ENCODE measurements at regions of chr13 and their contacts with region 1.

Region 1: GRCh38 chr13:44141725-44142539 is 231.7 kb upstream of the SERP2 start:
- DNase-seq: peak; percentile 98 to 100
- H3K4me3 ChIP-seq: peak overlapping the region; percentile 62
- H3K4me3 Mint-ChIP-seq: peak overlapping the region; percentile 83
- H3K27ac Mint-ChIP-seq: peak overlapping the region; percentile 94
- H3K4me1 ChIP-seq: peaks cover 28% of the 10 kb centered on the region
- H3K4me1 Mint-ChIP-seq: peaks cover 39% of the 10 kb centered on the region
- H3K27me3 ChIP-seq: no peaks in the 10 kb centered on the region
- H3K27me3 Mint-ChIP-seq: no peaks in the 10 kb centered on the region
- CTCF ChIP-seq: no peak

Region 2: GRCh38 chr13:44050450-44051063 is 91.4 kb before region 1 on chr13:
- CTCF ChIA-PET with region 1: no interaction called
- POLR2A ChIA-PET with region 1: interaction called, 7 read pairs
- intact Hi-C with region 1: loop called (anchors 1 kb)
- DNase-seq: peak in 1 of 2 experiments; percentile 43
- H3K4me3 ChIP-seq: no peak overlapping the region
- H3K4me3 Mint-ChIP-seq: no peak overlapping the region
- H3K27ac Mint-ChIP-seq: no peak overlapping the region
- H3K4me1 ChIP-seq: peaks cover 42% of the 10 kb centered on the region
- H3K4me1 Mint-ChIP-seq: peaks cover 36% of the 10 kb centered on the region
- H3K27me3 ChIP-seq: no peaks in the 10 kb centered on the region
- H3K27me3 Mint-ChIP-seq: no peaks in the 10 kb centered on the region
- CTCF ChIP-seq: peak; percentile 70 to 78

Region 3: GRCh38 chr13:44063876-44064275 is 78.1 kb before region 1 on chr13:
- CTCF ChIA-PET with region 1: no interaction called
- POLR2A ChIA-PET with region 1: no interaction called
- intact Hi-C with region 1: no loop called
- DNase-seq: no peak
- H3K4me3 ChIP-seq: no peak overlapping the region
- H3K4me3 Mint-ChIP-seq: no peak overlapping the region
- H3K27ac Mint-ChIP-seq: no peak overlapping the region
- H3K4me1 ChIP-seq: no peaks in the 10 kb centered on the region; the same call in 1 of the 2 replicates
- H3K4me1 Mint-ChIP-seq: peaks cover 12% of the 10 kb centered on the region
- H3K27me3 ChIP-seq: no peaks in the 10 kb centered on the region
- H3K27me3 Mint-ChIP-seq: no peaks in the 10 kb centered on the region
- CTCF ChIP-seq: no peak

Region 4: DNA sequence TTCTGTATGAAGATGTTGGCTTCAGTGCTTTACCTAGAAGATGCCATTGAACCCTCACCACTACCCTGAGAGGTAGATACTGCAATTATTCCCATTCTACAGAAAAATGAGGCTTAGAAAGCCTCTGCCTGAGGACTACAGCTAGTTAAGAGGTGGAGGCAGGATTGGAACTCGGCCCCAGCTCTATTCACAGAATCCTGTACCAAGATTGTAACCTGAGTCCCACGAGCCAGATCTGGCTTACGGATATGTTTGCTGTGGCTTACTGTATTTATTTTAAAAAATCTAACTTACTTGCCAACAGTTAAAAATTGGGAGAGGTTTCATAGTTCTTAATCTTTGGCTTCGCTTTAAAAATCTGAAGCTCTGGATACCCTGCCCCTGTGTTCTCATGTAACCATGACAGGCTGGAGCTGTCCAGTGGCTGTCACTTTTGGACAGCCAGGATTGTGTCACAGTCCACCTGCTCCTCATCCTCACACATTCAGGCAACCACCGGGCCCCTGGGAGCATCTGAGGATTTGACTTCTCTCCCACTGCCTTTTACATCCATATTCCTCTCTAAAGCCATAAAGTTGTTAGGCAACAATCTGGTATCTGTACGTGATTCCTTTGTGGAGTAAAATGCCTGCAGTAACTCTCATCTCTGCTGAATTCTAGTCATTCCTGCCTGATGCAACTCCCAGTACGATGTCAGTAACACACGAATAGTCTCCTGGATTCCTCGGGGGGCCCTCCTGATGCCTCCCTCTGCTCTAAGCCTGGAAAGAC is 70.9 kb after region 1 on chr13:
- CTCF ChIA-PET with region 1: no interaction called
- POLR2A ChIA-PET with region 1: interaction called, 5 read pairs
- intact Hi-C with region 1: loop called (anchors 2 kb)
- DNase-seq: peak; percentile 85 to 90
- H3K4me3 ChIP-seq: no peak overlapping the region
- H3K4me3 Mint-ChIP-seq: peak overlapping the region; percentile 47
- H3K27ac Mint-ChIP-seq: peak overlapping the region; percentile 97
- H3K4me1 ChIP-seq: peaks cover 18% of the 10 kb centered on the region
- H3K4me1 Mint-ChIP-seq: peaks cover 36% of the 10 kb centered on the region
- H3K27me3 ChIP-seq: no peaks in the 10 kb centered on the region
- H3K27me3 Mint-ChIP-seq: no peaks in the 10 kb centered on the region
- CTCF ChIP-seq: no peak

Region 5: GRCh38 chr13:44280456-44280855 is 138.5 kb after region 1 on chr13:
- CTCF ChIA-PET with region 1: interaction called, 3 read pairs
- POLR2A ChIA-PET with region 1: no interaction called
- intact Hi-C with region 1: loop called (anchors 5 kb)
- DNase-seq: no peak
- H3K4me3 ChIP-seq: no peak overlapping the region
- H3K4me3 Mint-ChIP-seq: no peak overlapping the region
- H3K27ac Mint-ChIP-seq: peak overlapping the region; percentile 86
- H3K4me1 ChIP-seq: peaks cover 52% of the 10 kb centered on the region
- H3K4me1 Mint-ChIP-seq: peaks cover 39% of the 10 kb centered on the region
- H3K27me3 ChIP-seq: no peaks in the 10 kb centered on the region
- H3K27me3 Mint-ChIP-seq: no peaks in the 10 kb centered on the region
- CTCF ChIP-seq: no peak

Region 6: GRCh38 chr13:44388427-44389059 is 246.6 kb after region 1 on chr13:
- CTCF ChIA-PET with region 1: no interaction called
- POLR2A ChIA-PET with region 1: interaction called, 4 read pairs
- intact Hi-C with region 1: loop called (anchors 5 kb)
- DNase-seq: peak; percentile 51 to 68
- H3K4me3 ChIP-seq: no peak overlapping the region
- H3K4me3 Mint-ChIP-seq: no peak overlapping the region
- H3K27ac Mint-ChIP-seq: peak overlapping the region; percentile 76
- H3K4me1 ChIP-seq: peaks cover 56% of the 10 kb centered on the region
- H3K4me1 Mint-ChIP-seq: peaks cover 51% of the 10 kb centered on the region
- H3K27me3 ChIP-seq: no peaks in the 10 kb centered on the region
- H3K27me3 Mint-ChIP-seq: no peaks in the 10 kb centered on the region
- CTCF ChIP-seq: no peak

Measured in Caco-2 (cell line).